Activated T-helper 1 cell treated with anti-CD3 and anti-CD28 coated beads, Interleukin-12 subunit alpha, Interleukin-12 subunit beta, Interleukin-2, Interleukin-4 antibody, amounts not matched to agents 30 ng/mL and 10 ng/mL and 1 ng/mL, durations not matched to agents 14 hours and 24 hours and 36 hours (primary cell): ENCODE measurements at regions of chr12 and their contacts with region 1.

Region 1: GRCh38 chr12:40107098-40107802 is 1.4 kb upstream of the SLC2A13 start:
- DNase-seq: peak; percentile 69
- H3K4me3 Mint-ChIP-seq: peak overlapping the region; percentile 80
- H3K27ac Mint-ChIP-seq: peak overlapping the region; percentile 26
- H3K4me1 Mint-ChIP-seq: peaks cover 30% of the 10 kb centered on the region
- H3K27me3 Mint-ChIP-seq: peaks cover 47% of the 10 kb centered on the region

Region 2: DNA sequence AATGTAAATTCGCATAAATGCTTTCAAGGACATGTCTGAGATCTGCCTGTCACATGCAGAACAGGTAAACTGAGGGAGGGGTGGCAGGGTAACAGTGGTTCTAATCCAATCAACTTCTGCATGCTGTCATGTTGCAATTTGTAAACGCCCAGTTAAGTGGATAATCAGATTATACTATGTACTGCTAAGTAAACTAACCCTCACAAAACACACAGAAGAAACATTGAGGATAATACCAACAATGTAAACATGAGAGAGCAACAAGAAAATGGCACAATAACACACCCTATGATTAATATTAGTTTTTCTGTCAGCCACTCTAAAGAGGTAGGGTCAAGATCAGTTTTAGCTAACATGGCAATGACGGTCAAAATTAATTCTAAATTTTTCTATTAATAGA is 788.1 kb before region 1 on chr12:
- intact Hi-C with region 1: loop called (anchors 5 kb)
- DNase-seq: no peak
- H3K4me3 Mint-ChIP-seq: no peak overlapping the region
- H3K27ac Mint-ChIP-seq: no peak overlapping the region
- H3K4me1 Mint-ChIP-seq: peaks cover 4% of the 10 kb centered on the region
- H3K27me3 Mint-ChIP-seq: no peaks in the 10 kb centered on the region

Region 3: GRCh38 chr12:39682689-39683477 is 424.4 kb before region 1 on chr12:
- intact Hi-C with region 1: loop called (anchors 10 kb)
- DNase-seq: no peak
- H3K4me3 Mint-ChIP-seq: peak overlapping the region; percentile 72
- H3K27ac Mint-ChIP-seq: peak overlapping the region; percentile 64
- H3K4me1 Mint-ChIP-seq: peaks cover 52% of the 10 kb centered on the region
- H3K27me3 Mint-ChIP-seq: no peaks in the 10 kb centered on the region

Region 4: DNA sequence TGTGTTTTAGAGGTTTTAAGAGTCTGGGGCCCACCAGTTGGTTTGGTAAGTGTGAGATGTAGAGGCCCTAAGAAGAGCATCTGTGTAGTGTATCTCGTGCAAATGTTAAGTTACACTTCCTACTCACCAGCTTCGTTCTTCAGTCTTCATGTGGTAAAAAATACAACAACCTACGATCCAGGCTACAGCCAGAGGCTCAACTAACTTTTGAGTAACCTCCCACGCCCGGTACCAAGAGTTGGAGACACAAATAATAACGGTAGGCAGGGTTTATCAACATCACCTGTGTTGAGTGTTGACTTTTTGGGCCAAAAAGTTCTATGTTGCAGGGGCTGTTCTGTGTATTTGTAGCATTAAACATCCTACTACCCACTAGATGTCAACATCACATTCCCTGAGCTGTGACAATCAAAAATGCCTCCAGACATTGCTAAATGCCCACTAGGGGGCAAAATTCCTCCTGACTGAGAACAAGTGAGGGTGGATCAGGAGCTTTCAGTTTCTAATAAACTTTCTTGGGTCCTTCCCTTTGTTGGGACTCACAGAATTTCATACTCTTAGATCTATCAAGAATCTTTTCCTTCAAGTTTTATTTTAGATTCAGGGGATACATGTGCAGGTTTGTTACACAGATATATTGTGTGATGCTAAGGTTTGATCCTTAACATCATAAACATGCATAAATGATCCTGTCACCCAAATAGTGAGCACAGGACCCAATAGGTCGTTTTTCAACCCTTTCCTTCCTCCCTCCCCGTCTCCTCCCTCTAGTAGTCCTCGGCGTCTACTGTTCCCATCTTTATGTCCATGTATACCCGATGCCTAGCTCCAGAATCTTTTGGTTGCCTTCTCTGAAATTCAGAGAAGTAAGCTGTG is 96.1 kb before region 1 on chr12:
- intact Hi-C with region 1: loop called (anchors 1 kb)
- DNase-seq: peak; percentile 49
- H3K4me3 Mint-ChIP-seq: peak overlapping the region; percentile 12
- H3K27ac Mint-ChIP-seq: no peak overlapping the region
- H3K4me1 Mint-ChIP-seq: peaks cover 31% of the 10 kb centered on the region
- H3K27me3 Mint-ChIP-seq: no peaks in the 10 kb centered on the region

Region 5: GRCh38 chr12:40137252-40137651 is 30.0 kb after region 1 on chr12:
- intact Hi-C with region 1: loop called (anchors 1 kb)
- DNase-seq: no peak
- H3K4me3 Mint-ChIP-seq: no peak overlapping the region
- H3K27ac Mint-ChIP-seq: no peak overlapping the region
- H3K4me1 Mint-ChIP-seq: peaks cover 16% of the 10 kb centered on the region
- H3K27me3 Mint-ChIP-seq: peaks cover 8% of the 10 kb centered on the region